ENCODE measurements at regions of chr3 and their contacts with region 1.

Region 1: GRCh38 chr3:98778852-98779413 is 15.8 kb downstream of the ST3GAL6 start:
- DNase-seq: peak; percentile 97
- H3K4me3 ChIP-seq: peak overlapping the region in 1 of 3 experiments; percentile 9
- H3K27ac ChIP-seq: peak overlapping the region; percentile 98
- H3K4me1 ChIP-seq: peaks cover 42% of the 10 kb centered on the region
- H3K27me3 ChIP-seq: no peaks in the 10 kb centered on the region
- CTCF ChIP-seq: no peak
- POLR2A ChIP-seq: no peak

Region 2: DNA sequence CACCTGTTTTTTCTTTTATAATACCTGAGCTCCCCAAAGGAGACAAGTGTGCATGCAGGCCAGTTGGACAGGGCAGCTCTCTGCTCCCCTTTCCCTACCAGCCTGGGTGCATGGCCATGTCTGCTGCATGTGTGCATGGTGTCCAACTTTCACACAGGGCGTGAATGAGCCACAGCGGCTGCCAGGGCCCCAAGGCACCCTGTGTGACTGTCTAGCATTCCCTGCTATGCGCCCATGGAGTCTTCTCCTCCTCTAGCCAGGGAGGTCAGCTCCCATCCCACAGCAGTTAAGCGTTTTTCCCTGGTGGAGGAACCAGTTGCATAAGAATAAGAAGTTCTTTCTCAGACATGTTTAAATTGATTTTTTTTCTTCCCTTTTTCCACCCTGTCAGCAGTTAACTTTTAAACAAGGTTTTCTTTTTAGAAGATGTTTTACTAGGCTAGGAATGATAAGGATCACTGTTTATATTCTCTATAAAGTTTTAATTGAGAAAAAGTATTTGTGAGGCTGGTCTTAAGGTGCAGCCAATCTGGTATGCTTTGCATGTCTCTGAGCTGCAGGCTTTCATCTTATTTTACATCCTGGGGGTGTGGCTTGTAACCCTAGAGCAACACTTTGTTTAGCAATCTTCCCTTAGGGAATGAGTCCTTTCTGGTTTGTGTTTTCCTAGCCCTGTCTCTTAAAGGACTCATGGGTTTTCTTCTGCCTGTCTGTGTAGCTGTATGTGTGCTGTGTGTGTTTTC is 669.0 kb before region 1 on chr3:
- CTCF ChIA-PET with region 1: no interaction called
- POLR2A ChIA-PET with region 1: no interaction called
- dilution Hi-C with region 1: no loop called
- intact Hi-C with region 1: no loop called
- DNase-seq: no peak
- H3K4me3 ChIP-seq: no peak overlapping the region
- H3K27ac ChIP-seq: no peak overlapping the region
- H3K4me1 ChIP-seq: no peaks in the 10 kb centered on the region
- H3K27me3 ChIP-seq: no peaks in the 10 kb centered on the region
- CTCF ChIP-seq: no peak
- POLR2A ChIP-seq: no peak

Region 3: DNA sequence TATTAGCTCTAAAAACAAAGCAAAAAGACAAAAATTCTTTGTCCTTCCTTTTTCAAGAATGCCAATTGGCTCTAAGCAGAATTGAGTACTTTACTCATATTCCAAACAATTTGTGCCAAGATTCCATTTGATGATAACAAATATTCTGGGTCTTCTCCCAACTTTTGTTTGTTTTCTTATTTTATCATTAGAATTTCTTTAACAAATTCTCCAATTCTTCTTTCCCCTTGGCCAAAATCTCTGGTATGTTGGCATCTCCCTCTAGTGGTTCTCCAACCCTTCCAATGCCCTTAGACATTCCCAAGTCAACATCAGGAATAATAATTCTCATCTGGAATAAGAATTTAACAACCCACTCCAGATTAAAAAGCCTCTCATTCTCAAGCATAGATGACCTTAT is 190.9 kb before region 1 on chr3:
- CTCF ChIA-PET with region 1: no interaction called
- POLR2A ChIA-PET with region 1: no interaction called
- dilution Hi-C with region 1: no loop called
- intact Hi-C with region 1: no loop called
- DNase-seq: no peak
- H3K4me3 ChIP-seq: no peak overlapping the region
- H3K27ac ChIP-seq: no peak overlapping the region
- H3K4me1 ChIP-seq: peaks cover 10% of the 10 kb centered on the region
- H3K27me3 ChIP-seq: no peaks in the 10 kb centered on the region
- CTCF ChIP-seq: peak; percentile 8 to 15
- POLR2A ChIP-seq: no peak

Region 4: GRCh38 chr3:98645039-98645438 is 133.9 kb before region 1 on chr3:
- CTCF ChIA-PET with region 1: no interaction called
- POLR2A ChIA-PET with region 1: no interaction called
- dilution Hi-C with region 1: no loop called
- intact Hi-C with region 1: no loop called
- DNase-seq: no peak
- H3K4me3 ChIP-seq: no peak overlapping the region
- H3K27ac ChIP-seq: no peak overlapping the region
- H3K4me1 ChIP-seq: no peaks in the 10 kb centered on the region
- H3K27me3 ChIP-seq: no peaks in the 10 kb centered on the region
- CTCF ChIP-seq: no peak
- POLR2A ChIP-seq: no peak

Region 5: GRCh38 chr3:98741121-98741716 is 37.7 kb before region 1 on chr3:
- CTCF ChIA-PET with region 1: interaction called, 29 read pairs
- POLR2A ChIA-PET with region 1: interaction called, 10 read pairs
- dilution Hi-C with region 1: no loop called
- intact Hi-C with region 1: no loop called
- DNase-seq: peak; percentile 72
- H3K4me3 ChIP-seq: no peak overlapping the region
- H3K27ac ChIP-seq: peak overlapping the region; percentile 73
- H3K4me1 ChIP-seq: peaks cover 31% of the 10 kb centered on the region
- H3K27me3 ChIP-seq: no peaks in the 10 kb centered on the region
- CTCF ChIP-seq: no peak
- POLR2A ChIP-seq: peak; percentile 22

Region 6: DNA sequence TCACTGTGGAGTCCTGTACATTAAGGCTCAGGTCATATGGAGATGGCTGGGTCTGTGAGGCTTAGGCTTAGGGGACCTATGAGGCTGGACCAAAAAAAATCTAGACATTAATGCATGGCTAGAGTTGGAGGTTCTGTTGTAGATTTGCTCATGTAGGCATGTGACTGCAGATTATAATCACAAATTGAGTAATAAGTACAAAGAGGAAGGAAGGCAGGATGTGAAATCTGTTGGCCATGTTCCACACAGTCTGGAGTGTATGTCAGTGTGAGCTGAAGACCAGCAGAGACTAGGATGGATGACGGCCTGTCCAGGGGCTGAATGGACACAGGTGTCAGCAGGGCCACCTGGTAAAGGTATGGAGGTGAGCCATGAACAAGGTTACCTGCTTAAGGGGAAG is 15.9 kb before region 1 on chr3 and contains the start of gene ST3GAL6:
- CTCF ChIA-PET with region 1: interaction called, 4 read pairs
- POLR2A ChIA-PET with region 1: interaction called, 6 read pairs
- dilution Hi-C with region 1: no loop called
- intact Hi-C with region 1: loop called (anchors 1 kb)
- DNase-seq: peak; percentile 85
- H3K4me3 ChIP-seq: peak within 1 kb of the TSS in 1 of 3 experiments; percentile 9
- H3K27ac ChIP-seq: peak within 1 kb of the TSS; percentile 66
- H3K4me1 ChIP-seq: peaks cover 66% of the 10 kb centered on the region
- H3K27me3 ChIP-seq: no peaks in the 10 kb centered on the region
- CTCF ChIP-seq: no peak
- POLR2A ChIP-seq: no peak
- total RNA-seq, gene ST3GAL6: 17.7 and 35.9 TPM in 2 replicates

Region 7: GRCh38 chr3:98791341-98792325 is 12.7 kb after region 1 on chr3:
- CTCF ChIA-PET with region 1: interaction called, 18 read pairs
- POLR2A ChIA-PET with region 1: no interaction called
- dilution Hi-C with region 1: no loop called
- intact Hi-C with region 1: no loop called
- DNase-seq: peak; percentile 82
- H3K4me3 ChIP-seq: no peak overlapping the region
- H3K27ac ChIP-seq: peak overlapping the region; percentile 2
- H3K4me1 ChIP-seq: peaks cover 20% of the 10 kb centered on the region
- H3K27me3 ChIP-seq: no peaks in the 10 kb centered on the region
- CTCF ChIP-seq: no peak
- POLR2A ChIP-seq: no peak

Region 8: GRCh38 chr3:98843266-98843959 is 64.5 kb after region 1 on chr3:
- CTCF ChIA-PET with region 1: no interaction called
- POLR2A ChIA-PET with region 1: no interaction called
- dilution Hi-C with region 1: no loop called
- intact Hi-C with region 1: no loop called
- DNase-seq: no peak
- H3K4me3 ChIP-seq: no peak overlapping the region
- H3K27ac ChIP-seq: no peak overlapping the region
- H3K4me1 ChIP-seq: no peaks in the 10 kb centered on the region
- H3K27me3 ChIP-seq: no peaks in the 10 kb centered on the region
- CTCF ChIP-seq: no peak
- POLR2A ChIP-seq: no peak